Panc1 (cell line): ENCODE measurements at regions of chr5 and their contacts with region 1.

Region 1: GRCh38 chr5:135138116-135138850 is 104.3 kb upstream of the PITX1 start:
- DNase-seq: no peak
- ATAC-seq: no peak
- H3K4me3 ChIP-seq: no peak overlapping the region
- H3K27ac ChIP-seq: no peak overlapping the region
- H3K4me1 ChIP-seq: no peaks in the 10 kb centered on the region
- H3K27me3 ChIP-seq: no peaks in the 10 kb centered on the region
- CTCF ChIP-seq: no peak

Region 2: DNA sequence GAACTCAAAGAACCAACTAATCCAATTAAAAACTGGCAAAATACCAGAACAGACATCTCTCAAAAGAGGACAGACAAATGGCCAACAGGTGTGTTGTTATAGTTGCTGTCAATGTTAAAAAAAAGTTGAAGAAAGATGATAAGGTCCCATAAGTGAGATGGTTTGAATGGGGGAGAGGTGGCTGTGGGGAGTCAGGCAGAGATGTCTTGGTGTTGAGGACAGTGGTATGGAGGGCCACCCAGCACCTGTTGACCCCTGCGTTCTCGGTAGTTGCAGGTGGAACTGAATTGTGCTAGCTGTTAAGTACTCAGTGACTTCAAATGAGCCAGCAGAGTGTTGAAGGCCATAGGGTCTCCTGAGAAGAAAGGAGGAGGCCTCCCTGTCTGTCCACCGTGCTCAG is 48.4 kb before region 1 on chr5:
- CTCF ChIA-PET with region 1: no interaction called
- POLR2A ChIA-PET with region 1: no interaction called
- in situ Hi-C with region 1: no loop called
- intact Hi-C with region 1: loop called (anchors 1 kb)
- DNase-seq: no peak
- ATAC-seq: no peak
- H3K4me3 ChIP-seq: no peak overlapping the region
- H3K27ac ChIP-seq: no peak overlapping the region
- H3K4me1 ChIP-seq: no peaks in the 10 kb centered on the region
- H3K27me3 ChIP-seq: no peaks in the 10 kb centered on the region
- CTCF ChIP-seq: no peak